Activated CD8-positive, alpha-beta T cell treated with anti-CD3 and anti-CD28 coated beads, Interleukin-2, amount 10 ng/mL, durations not matched to agents 7 days and 5 days (primary cell): ENCODE measurements at regions of chr14 and their contacts with region 1.

Region 1: DNA sequence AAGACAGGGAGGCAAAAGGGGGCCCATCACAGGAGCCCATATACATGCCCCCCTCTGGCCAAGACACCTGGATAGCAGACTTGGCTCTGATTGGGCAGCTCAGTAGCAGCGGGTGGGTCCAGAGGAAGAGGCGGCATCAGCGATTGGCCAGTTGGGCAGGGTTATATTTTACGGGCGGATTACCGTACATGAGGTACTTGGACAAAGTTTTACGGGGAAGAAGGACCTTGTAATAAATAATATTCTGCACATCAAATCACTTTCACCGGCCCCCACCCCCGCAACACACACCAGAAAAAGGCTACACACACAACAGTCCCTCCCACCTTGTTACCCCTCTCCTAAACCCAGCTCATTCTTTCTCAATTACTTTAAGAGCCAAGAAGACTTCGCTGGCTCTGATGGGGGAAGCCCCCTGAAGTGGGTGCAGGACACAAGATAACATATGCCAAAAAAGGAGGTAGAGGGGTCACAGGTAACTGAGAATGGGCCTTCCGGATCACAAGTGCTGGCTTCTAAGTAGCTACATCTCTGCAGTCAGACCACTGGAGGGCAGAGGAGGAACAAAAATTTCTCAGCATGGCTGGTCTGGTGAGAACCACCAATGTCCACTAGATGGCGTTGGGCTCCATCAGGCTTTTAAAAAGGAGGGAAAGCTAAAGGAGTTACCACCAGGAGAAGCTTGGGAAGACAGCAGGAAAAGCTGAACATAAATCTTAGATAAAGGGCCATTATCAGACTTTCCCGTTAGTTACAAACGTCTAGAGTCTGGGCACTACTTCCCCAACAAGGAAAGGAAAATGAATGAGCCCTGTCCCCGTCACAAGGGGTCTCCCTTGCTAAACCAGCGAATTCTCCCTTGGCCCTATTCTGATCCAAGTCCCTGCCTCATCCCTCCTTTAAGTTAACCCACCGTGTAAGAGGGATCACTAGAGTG is 11.4 kb upstream of the CDH24 start:
- DNase-seq: peak; percentile 88
- ATAC-seq: peak; percentile 75
- H3K4me3 Mint-ChIP-seq: peak overlapping the region; percentile 9
- H3K27ac Mint-ChIP-seq: peak overlapping the region; percentile 10
- H3K4me1 Mint-ChIP-seq: peaks cover 33% of the 10 kb centered on the region
- H3K27me3 Mint-ChIP-seq: no peaks in the 10 kb centered on the region

Region 2: GRCh38 chr14:22333422-22334276 is 735.1 kb before region 1 on chr14:
- CTCF ChIA-PET with region 1: no interaction called
- POLR2A ChIA-PET with region 1: no interaction called
- DNase-seq: no peak
- ATAC-seq: no peak
- H3K4me3 Mint-ChIP-seq: no peak overlapping the region
- H3K27ac Mint-ChIP-seq: no peak overlapping the region
- H3K4me1 Mint-ChIP-seq: no peaks in the 10 kb centered on the region
- H3K27me3 Mint-ChIP-seq: no peaks in the 10 kb centered on the region

Region 3: DNA sequence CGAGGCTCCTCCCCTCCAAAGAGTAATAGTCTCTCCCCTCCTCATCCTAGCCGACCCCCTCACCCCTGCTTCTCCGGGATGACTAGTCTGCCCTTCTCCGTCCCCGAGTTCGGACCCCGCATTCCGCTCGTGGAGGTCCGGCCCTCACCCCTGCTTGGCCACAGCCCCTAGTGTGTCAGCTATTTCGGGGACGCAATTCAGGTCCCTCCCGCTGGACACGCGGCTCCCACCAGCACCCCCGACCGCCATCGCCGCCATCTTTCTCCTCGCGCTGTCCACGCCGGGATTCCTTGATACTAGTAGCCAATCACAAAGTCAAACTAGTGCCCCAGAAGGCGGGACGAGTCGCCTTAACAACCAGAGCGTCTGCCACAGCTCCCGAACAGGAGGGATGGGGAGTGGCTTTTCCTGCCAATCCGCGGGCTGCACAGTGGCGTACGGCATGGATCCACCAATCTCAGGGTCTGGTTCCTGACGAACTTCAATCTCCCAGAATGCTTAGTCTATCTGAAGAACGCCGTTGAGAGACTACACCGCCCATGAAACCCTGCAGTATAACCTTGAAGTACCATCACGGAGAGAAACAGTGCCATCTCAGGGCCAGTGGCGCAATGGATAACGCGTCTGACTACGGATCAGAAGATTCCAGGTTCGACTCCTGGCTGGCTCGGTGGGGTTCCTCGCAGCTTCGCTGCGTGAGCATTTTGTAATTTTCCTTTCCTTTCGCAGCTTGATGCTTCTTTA is 139.5 kb before region 1 on chr14 and contains the start of gene PRMT5:
- CTCF ChIA-PET with region 1: interaction called, 12 read pairs
- POLR2A ChIA-PET with region 1: interaction called, 4 read pairs
- DNase-seq: peak; percentile 98
- ATAC-seq: peak; percentile 98
- H3K4me3 Mint-ChIP-seq: no peak within 1 kb of the TSS
- H3K27ac Mint-ChIP-seq: no peak within 1 kb of the TSS
- H3K4me1 Mint-ChIP-seq: peaks cover 27% of the 10 kb centered on the region
- H3K27me3 Mint-ChIP-seq: no peaks in the 10 kb centered on the region
- total RNA-seq, gene PRMT5: 55.5 to 64.9 TPM

Region 4: GRCh38 chr14:22973217-22974032 is 95.3 kb before region 1 on chr14:
- CTCF ChIA-PET with region 1: interaction called, 41 read pairs
- POLR2A ChIA-PET with region 1: no interaction called
- DNase-seq: peak; percentile 55
- ATAC-seq: no peak
- H3K4me3 Mint-ChIP-seq: no peak overlapping the region
- H3K27ac Mint-ChIP-seq: no peak overlapping the region
- H3K4me1 Mint-ChIP-seq: no peaks in the 10 kb centered on the region
- H3K27me3 Mint-ChIP-seq: peaks cover 7% of the 10 kb centered on the region

Region 5: GRCh38 chr14:23025151-23025814 is 43.5 kb before region 1 on chr14:
- CTCF ChIA-PET with region 1: interaction called, 14 read pairs
- POLR2A ChIA-PET with region 1: no interaction called
- DNase-seq: no peak
- ATAC-seq: no peak
- H3K4me3 Mint-ChIP-seq: no peak overlapping the region
- H3K27ac Mint-ChIP-seq: peak overlapping the region; percentile 40
- H3K4me1 Mint-ChIP-seq: peaks cover 50% of the 10 kb centered on the region
- H3K27me3 Mint-ChIP-seq: no peaks in the 10 kb centered on the region

Region 6: DNA sequence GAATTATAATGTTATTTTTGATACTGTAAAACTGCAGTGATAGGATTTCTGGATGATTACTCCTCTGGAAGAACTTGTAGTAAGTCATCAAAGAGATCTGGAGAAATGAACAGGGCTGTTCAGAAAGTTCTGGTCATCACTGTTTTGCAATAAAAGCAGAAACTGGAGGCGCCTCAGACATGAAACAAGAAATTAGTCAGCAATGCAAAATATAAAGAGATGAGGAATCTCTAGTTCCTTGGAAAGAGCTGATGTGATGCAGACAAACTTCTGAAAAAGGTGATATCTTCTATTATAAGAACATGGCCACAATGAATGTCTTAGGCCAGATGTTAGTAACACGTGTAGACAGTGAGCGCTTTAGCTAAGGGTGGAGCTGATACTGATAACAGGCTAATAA is 16.7 kb after region 1 on chr14:
- CTCF ChIA-PET with region 1: interaction called, 35 read pairs
- POLR2A ChIA-PET with region 1: interaction called, 3 read pairs
- DNase-seq: no peak
- ATAC-seq: no peak
- H3K4me3 Mint-ChIP-seq: no peak overlapping the region
- H3K27ac Mint-ChIP-seq: no peak overlapping the region
- H3K4me1 Mint-ChIP-seq: no peaks in the 10 kb centered on the region
- H3K27me3 Mint-ChIP-seq: no peaks in the 10 kb centered on the region

Region 7: GRCh38 chr14:23120541-23121251 is 52.0 kb after region 1 on chr14:
- CTCF ChIA-PET with region 1: interaction called, 30 read pairs
- POLR2A ChIA-PET with region 1: no interaction called
- DNase-seq: peak; percentile 90
- ATAC-seq: peak; percentile 82
- H3K4me3 Mint-ChIP-seq: peak overlapping the region; percentile 48
- H3K27ac Mint-ChIP-seq: peak overlapping the region; percentile 88
- H3K4me1 Mint-ChIP-seq: peaks cover 41% of the 10 kb centered on the region
- H3K27me3 Mint-ChIP-seq: no peaks in the 10 kb centered on the region

Region 8: GRCh38 chr14:23137192-23137829 is 68.6 kb after region 1 on chr14:
- CTCF ChIA-PET with region 1: no interaction called
- POLR2A ChIA-PET with region 1: no interaction called
- DNase-seq: no peak
- ATAC-seq: no peak
- H3K4me3 Mint-ChIP-seq: no peak overlapping the region
- H3K27ac Mint-ChIP-seq: no peak overlapping the region
- H3K4me1 Mint-ChIP-seq: no peaks in the 10 kb centered on the region
- H3K27me3 Mint-ChIP-seq: peaks cover 2% of the 10 kb centered on the region